Activated naive CD4-positive, alpha-beta T cell treated with anti-CD3 and anti-CD28 coated beads for 36 hours (primary cell): ENCODE measurements at regions of chr2 and their contacts with region 1.

Region 1: DNA sequence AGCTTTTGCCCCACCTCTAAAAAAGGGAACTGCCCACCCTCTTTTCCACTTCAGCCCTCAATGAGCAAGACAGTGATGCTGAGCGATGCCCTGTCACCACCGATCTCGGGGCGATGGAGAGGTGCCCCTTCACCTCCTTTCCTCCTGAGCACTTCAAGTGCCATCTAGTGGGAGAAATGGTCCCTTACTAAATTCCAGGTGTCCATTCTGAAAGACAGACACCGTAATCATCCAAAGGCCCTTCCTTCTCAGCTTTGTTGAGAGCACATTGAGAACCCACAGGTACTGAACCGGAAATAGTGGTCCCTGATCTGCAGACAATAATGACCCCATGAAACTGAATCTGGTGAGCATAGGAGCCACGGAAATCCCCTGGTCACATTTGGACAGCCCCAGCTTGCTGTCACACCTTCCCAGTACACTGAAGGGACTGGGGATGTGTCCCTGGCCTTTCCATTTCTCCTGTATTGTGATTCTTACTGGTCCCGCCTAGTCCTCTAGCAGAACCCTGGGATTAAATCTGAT is 38.5 kb downstream of the KCTD18 start:
- DNase-seq: peak; percentile 59
- H3K4me3 Mint-ChIP-seq: no peak overlapping the region
- H3K27ac Mint-ChIP-seq: no peak overlapping the region
- H3K4me1 Mint-ChIP-seq: peaks cover 38% of the 10 kb centered on the region
- H3K27me3 Mint-ChIP-seq: no peaks in the 10 kb centered on the region

Region 2: GRCh38 chr2:199979832-199980628 is 491.4 kb before region 1 on chr2:
- CTCF ChIA-PET with region 1: interaction called, 12 read pairs
- intact Hi-C with region 1: loop called (anchors 1 kb)
- DNase-seq: peak; percentile 92
- H3K4me3 Mint-ChIP-seq: no peak overlapping the region
- H3K27ac Mint-ChIP-seq: peak overlapping the region; percentile 14
- H3K4me1 Mint-ChIP-seq: peaks cover 22% of the 10 kb centered on the region
- H3K27me3 Mint-ChIP-seq: no peaks in the 10 kb centered on the region

Region 3: GRCh38 chr2:200306196-200306930 is 165.0 kb before region 1 on chr2 and contains the start of gene SPATS2L:
- CTCF ChIA-PET with region 1: interaction called, 9 read pairs
- intact Hi-C with region 1: loop called (anchors 1 kb)
- DNase-seq: peak; percentile 64
- H3K4me3 Mint-ChIP-seq: peak within 1 kb of the TSS; percentile 85
- H3K27ac Mint-ChIP-seq: peak within 1 kb of the TSS; percentile 4
- H3K4me1 Mint-ChIP-seq: peaks cover 13% of the 10 kb centered on the region
- H3K27me3 Mint-ChIP-seq: peaks cover 15% of the 10 kb centered on the region
- total RNA-seq, gene SPATS2L: 8.9 to 10.9 TPM

Region 4: GRCh38 chr2:200447139-200447855 is 24.1 kb before region 1 on chr2:
- CTCF ChIA-PET with region 1: interaction called, 5 read pairs
- intact Hi-C with region 1: loop called (anchors 1 kb)
- DNase-seq: no peak
- H3K4me3 Mint-ChIP-seq: no peak overlapping the region
- H3K27ac Mint-ChIP-seq: peak overlapping the region; percentile 48
- H3K4me1 Mint-ChIP-seq: peaks cover 26% of the 10 kb centered on the region
- H3K27me3 Mint-ChIP-seq: no peaks in the 10 kb centered on the region

Region 5: GRCh38 chr2:200509612-200510433 is 38.4 kb after region 1 on chr2 and contains the start of gene KCTD18:
- CTCF ChIA-PET with region 1: no interaction called
- intact Hi-C with region 1: loop called (anchors 1 kb)
- DNase-seq: peak; percentile 92
- H3K4me3 Mint-ChIP-seq: peak within 1 kb of the TSS; percentile 94
- H3K27ac Mint-ChIP-seq: peak within 1 kb of the TSS; percentile 79
- H3K4me1 Mint-ChIP-seq: peaks cover 16% of the 10 kb centered on the region
- H3K27me3 Mint-ChIP-seq: no peaks in the 10 kb centered on the region
- total RNA-seq, gene KCTD18: 8.7 to 10.0 TPM

Region 6: GRCh38 chr2:201049455-201049854 is 578.1 kb after region 1 on chr2:
- CTCF ChIA-PET with region 1: no interaction called
- intact Hi-C with region 1: no loop called
- DNase-seq: no peak
- H3K4me3 Mint-ChIP-seq: no peak overlapping the region
- H3K27ac Mint-ChIP-seq: no peak overlapping the region
- H3K4me1 Mint-ChIP-seq: peaks cover 10% of the 10 kb centered on the region
- H3K27me3 Mint-ChIP-seq: no peaks in the 10 kb centered on the region